Ovary (tissue), 10 donors: ENCODE measurements at regions of chr9 and their contacts with region 1.

Region 1: DNA sequence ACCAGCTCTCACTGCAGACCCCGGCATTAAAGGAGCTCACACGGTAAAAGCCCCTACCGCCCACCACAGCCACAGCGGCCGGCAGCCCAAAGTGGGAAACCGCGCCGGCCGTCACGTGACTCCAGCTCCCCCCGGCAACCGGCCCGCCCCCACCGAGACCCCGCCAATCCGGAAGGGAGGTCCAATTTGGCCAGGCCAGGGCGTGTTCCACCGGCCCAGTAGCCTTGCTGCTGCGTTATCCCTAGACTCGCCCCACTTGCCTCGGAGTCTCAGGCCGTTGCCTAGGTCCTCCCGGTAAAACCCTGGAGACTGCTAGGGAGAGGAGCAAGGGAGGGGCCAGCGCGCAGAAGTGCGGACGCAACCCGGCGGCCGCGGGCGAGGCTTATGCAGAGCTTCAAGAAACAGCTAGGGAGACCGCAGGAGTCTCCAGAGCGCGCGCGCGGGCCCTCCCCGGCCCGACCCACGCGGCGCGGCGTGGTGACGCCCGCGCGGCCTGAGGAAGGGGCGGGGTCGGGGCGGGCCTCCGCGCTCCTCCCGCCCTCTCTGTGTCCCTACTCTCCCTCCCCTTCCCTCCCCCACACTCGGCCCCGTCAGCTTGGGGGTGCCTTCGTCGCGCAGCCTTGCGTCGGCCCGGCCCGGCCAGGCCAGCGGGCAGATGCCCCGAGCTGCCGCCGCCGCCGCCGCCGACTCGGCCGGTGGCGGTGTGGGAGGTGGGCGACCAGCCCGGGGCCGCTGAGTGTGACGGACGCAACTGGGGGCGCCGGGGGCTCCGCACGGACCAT is at the start of gene RIC1:
- DNase-seq: peak; percentile 89 to 92 (median 92)
- H3K4me3 ChIP-seq: peak within 1 kb of the TSS; percentile 81
- H3K27ac ChIP-seq: peak within 1 kb of the TSS; percentile 97 to 99
- H3K4me1 ChIP-seq: peaks cover 8% of the 10 kb centered on the region
- H3K27me3 ChIP-seq: no peaks in the 10 kb centered on the region
- CTCF ChIP-seq: peak in 1 of 3 donors; percentile 47
- EP300 ChIP-seq: no peak
- POLR2A ChIP-seq: peak; percentile 90
- total RNA-seq, gene RIC1: 16.6 to 35.6 (median 21.9) TPM

Region 2: DNA sequence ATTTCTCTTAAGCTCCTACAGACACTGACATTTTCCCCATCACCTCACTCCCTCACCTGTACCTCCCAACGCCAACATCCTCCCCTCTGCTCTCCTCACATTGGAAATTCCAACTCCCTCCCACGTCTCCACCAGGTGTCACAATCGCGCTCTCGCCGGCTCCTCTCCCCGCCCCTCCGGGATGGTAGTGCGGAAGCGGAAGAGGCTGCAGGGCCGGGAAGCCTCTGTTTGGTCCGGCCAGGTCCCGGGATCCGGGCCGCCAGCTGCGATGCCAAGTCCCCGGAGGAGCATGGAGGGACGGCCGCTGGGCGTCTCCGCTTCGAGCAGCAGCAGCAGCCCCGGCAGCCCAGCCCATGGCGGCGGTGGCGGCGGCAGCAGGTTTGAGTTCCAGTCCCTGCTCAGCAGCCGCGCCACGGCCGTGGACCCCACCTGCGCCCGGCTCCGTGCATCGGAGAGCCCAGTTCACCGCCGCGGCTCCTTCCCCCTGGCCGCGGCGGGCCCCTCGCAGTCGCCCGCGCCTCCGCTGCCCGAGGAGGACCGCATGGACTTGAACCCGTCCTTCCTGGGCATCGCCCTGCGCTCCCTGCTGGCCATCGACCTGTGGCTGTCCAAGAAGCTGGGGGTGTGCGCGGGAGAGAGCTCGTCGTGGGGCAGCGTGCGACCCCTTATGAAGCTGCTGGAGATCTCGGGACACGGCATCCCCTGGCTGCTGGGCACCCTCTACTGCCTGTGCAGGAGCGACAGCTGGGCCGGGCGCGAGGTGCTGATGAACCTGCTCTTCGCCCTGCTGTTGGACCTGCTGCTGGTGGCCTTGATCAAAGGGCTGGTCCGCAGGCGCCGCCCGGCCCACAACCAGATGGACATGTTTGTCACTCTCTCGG is 966.4 kb before region 1 on chr9 and contains the start of gene PLPP6:
- intact Hi-C with region 1: loop called in 1 of 4 experiments (anchors 10 kb)
- DNase-seq: peak; percentile 86 to 90 (median 88)
- H3K4me3 ChIP-seq: peak within 1 kb of the TSS; percentile 84
- H3K27ac ChIP-seq: peak within 1 kb of the TSS; percentile 15 to 49
- H3K4me1 ChIP-seq: peaks cover 6% of the 10 kb centered on the region
- H3K27me3 ChIP-seq: no peaks in the 10 kb centered on the region
- CTCF ChIP-seq: peak; percentile 46 to 58 (median 55)
- EP300 ChIP-seq: no peak
- POLR2A ChIP-seq: peak; percentile 33
- total RNA-seq, gene PLPP6: 4.6 to 10.0 (median 5.2) TPM

Region 3: DNA sequence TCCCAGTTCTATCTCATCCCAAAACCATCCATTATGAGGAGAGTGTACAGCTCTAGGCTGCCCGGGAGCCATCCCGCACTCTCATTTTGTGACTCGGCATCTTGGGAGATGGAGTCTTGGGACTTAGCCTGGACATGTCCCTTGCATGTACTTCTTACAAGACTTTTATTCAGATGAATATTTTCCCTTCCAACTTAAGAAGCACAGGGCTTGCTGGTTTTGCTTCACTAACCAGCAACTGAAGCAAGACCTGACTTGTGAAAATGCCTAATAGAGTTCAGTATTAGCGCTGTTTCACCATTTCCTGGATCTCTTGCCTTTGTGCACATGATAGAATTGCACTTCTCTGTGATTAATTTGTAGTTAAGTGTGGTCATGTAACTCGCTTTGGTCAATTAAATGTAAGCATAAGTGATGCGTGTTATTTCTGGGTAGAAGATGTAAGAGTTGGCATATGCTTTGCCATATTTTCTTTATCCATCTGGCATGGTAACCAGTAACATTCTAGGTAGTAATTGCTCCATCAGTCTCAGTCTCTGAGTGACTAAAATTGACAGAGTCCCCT is 62.6 kb before region 1 on chr9:
- intact Hi-C with region 1: no loop called
- DNase-seq: no peak
- H3K4me3 ChIP-seq: no peak overlapping the region
- H3K27ac ChIP-seq: no peak overlapping the region
- H3K4me1 ChIP-seq: no peaks in the 10 kb centered on the region
- H3K27me3 ChIP-seq: no peaks in the 10 kb centered on the region
- CTCF ChIP-seq: no peak
- EP300 ChIP-seq: no peak
- POLR2A ChIP-seq: no peak

Region 4: DNA sequence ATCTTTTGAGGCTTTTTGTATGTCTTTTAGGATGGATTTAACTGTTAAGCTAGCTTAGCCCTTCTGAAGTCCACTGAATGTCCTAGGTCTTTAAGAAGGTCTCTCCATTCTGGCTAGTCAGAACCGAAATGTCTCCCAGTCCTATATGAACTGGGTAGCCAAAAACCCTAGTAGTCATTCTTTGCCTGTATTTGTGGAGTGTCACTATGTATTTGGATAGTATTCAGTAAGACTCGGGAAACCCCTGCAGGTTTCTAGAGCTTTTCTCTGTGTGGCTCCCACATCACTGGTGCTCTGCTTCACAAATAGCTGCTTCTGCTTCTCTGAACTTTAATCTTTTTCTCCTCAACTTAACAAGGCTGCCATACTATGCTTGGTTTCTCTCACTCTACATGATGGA is 68.2 kb after region 1 on chr9:
- intact Hi-C with region 1: loop called in 1 of 4 experiments (anchors 5 kb)
- DNase-seq: no peak
- H3K4me3 ChIP-seq: no peak overlapping the region
- H3K27ac ChIP-seq: no peak overlapping the region
- H3K4me1 ChIP-seq: peaks cover 2% of the 10 kb centered on the region
- H3K27me3 ChIP-seq: no peaks in the 10 kb centered on the region
- CTCF ChIP-seq: no peak
- EP300 ChIP-seq: no peak
- POLR2A ChIP-seq: no peak